Common myeloid progenitor, CD34-positive (primary cell): ENCODE measurements at regions of chr22 and their contacts with region 1.

Region 1: GRCh38 chr22:50620593-50621355 is 7.2 kb downstream of the ARSA start:
- DNase-seq: peak; percentile 74 to 92 (median 88)
- H3K4me3 ChIP-seq: peak overlapping the region in 6 of 7 experiments; percentile 61 to 82 (median 66)
- H3K27ac ChIP-seq: no peak overlapping the region
- H3K4me1 ChIP-seq: peaks cover 13 to 35% (median 29%) of the 10 kb centered on the region in 4 experiments
- H3K27me3 ChIP-seq: no peaks in the 10 kb centered on the region

Region 2: DNA sequence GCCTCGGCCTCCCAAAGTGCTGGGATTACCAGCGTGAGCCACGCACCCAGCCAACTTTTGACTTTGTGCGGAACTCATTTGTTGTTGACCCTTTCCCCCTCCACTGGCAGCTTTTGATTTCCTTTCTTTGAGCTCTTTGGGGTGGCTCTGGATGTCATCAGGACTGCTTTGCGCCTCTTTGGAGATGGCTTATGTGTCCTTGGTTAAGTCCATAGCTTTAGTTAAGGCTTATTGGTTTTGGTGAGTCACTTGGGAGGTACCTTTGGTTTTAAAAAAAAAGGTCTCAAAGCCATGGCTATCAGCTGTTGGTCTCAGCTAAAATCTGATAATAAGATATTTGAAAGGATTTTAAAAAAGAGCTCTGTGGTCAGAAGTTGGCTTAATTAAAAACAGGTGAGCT is 12.3 kb after region 1 on chr22:
- CTCF ChIA-PET with region 1: interaction called, 13 read pairs
- POLR2A ChIA-PET with region 1: interaction called, 3 read pairs
- DNase-seq: no peak
- H3K4me3 ChIP-seq: no peak overlapping the region
- H3K27ac ChIP-seq: no peak overlapping the region
- H3K4me1 ChIP-seq: peaks cover 3 to 23% (median 10%) of the 10 kb centered on the region in 4 experiments
- H3K27me3 ChIP-seq: no peaks in the 10 kb centered on the region

Region 3: DNA sequence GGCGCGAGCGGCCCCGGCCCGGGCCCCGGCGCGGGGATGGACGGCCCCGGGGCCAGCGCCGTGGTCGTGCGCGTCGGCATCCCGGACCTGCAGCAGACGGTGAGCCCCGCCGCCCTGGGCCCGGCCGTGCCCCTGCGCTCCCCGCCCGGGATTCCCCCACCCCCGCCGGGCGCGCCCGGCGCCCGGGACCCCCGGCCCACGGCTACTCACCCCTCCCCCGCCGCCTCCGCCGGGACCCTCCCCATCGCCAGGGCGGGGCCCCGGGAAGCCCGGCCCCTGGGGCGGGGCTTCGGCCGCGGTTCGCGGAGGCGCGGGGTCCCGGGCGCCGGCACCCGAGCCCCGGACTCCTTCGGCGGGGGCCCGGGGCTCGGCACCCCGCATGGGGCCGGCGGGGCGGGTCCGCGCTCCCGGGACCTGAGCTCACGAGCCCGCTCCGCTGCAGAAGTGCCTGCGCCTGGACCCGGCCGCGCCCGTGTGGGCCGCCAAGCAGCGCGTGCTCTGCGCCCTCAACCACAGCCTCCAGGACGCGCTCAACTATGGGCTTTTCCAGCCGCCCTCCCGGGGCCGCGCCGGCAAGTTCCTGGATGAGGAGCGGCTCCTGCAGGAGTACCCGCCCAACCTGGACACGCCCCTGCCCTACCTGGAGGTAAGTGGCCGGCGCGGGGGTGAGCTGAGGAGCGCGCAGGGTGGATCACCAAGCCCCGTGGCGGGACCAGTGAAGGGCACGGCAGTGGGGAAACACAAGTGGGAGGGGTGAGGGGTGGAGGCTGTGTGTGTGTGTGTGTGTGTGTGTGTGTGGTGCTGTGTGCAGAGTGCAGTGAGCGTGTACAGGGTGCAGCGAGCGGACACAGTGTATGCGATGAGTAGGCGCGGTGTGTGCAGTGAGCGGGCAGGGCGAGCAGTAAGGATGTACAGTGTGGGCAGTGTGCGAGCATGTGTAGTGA is 54.1 kb after region 1 on chr22:
- CTCF ChIA-PET with region 1: interaction called, 6 read pairs
- POLR2A ChIA-PET with region 1: interaction called, 15 read pairs
- DNase-seq: peak in 2 of 3 donors; percentile 41 to 58
- H3K4me3 ChIP-seq: peak overlapping the region; percentile 44 to 77 (median 73)
- H3K27ac ChIP-seq: no peak overlapping the region
- H3K4me1 ChIP-seq: peaks cover 0 to 58% (median 44%) of the 10 kb centered on the region in 4 experiments
- H3K27me3 ChIP-seq: no peaks in the 10 kb centered on the region